Natural killer cell (primary cell): ENCODE measurements at regions of chr20 and their contacts with region 1.

Region 1: GRCh38 chr20:5100684-5101347 is 18.9 kb downstream of the PCNA start:
- DNase-seq: peak; percentile 72 to 86
- ATAC-seq: peak; percentile 84 to 98 (median 89)
- H3K4me3 ChIP-seq: no peak overlapping the region
- H3K4me3 Mint-ChIP-seq: no peak overlapping the region
- H3K27ac ChIP-seq: no peak overlapping the region
- H3K27ac Mint-ChIP-seq: peak overlapping the region; percentile 72 to 74
- H3K4me1 ChIP-seq: peaks cover 4% of the 10 kb centered on the region
- H3K4me1 Mint-ChIP-seq: peaks cover 17% of the 10 kb centered on the region in 2 donors
- H3K27me3 ChIP-seq: no peaks in the 10 kb centered on the region
- H3K27me3 Mint-ChIP-seq: no peaks in the 10 kb centered on the region
- CTCF ChIP-seq: peak; percentile 97

Region 2: GRCh38 chr20:5001174-5002076 is 99.4 kb before region 1 on chr20 and contains the start of gene SLC23A2:
- intact Hi-C with region 1: loop called (anchors 1 kb)
- DNase-seq: peak; percentile 49 to 81
- ATAC-seq: peak; percentile 87 to 91 (median 90)
- H3K4me3 ChIP-seq: peak within 1 kb of the TSS; percentile 73
- H3K4me3 Mint-ChIP-seq: peak within 1 kb of the TSS; percentile 96
- H3K27ac ChIP-seq: peak within 1 kb of the TSS; percentile 36
- H3K27ac Mint-ChIP-seq: peak within 1 kb of the TSS; percentile 79 to 94
- H3K4me1 ChIP-seq: peaks cover 18% of the 10 kb centered on the region
- H3K4me1 Mint-ChIP-seq: peaks cover 28 to 37% of the 10 kb centered on the region in 2 donors
- H3K27me3 ChIP-seq: no peaks in the 10 kb centered on the region
- H3K27me3 Mint-ChIP-seq: no peaks in the 10 kb centered on the region
- CTCF ChIP-seq: no peak
- total RNA-seq, gene SLC23A2: 21.8 to 31.5 (median 26.0) TPM